Right cardiac atrium (tissue), 5 donors: ENCODE measurements at regions of chr9 and their contacts with region 1.

Region 1: GRCh38 chr9:93962561-93963440 is 7.6 kb upstream of the BARX1 start:
- DNase-seq: peak; percentile 72 to 89 (median 85)
- ATAC-seq: peak; percentile 73 to 83
- H3K4me3 ChIP-seq: no peak overlapping the region
- H3K27ac ChIP-seq: no peak overlapping the region
- H3K4me1 ChIP-seq: peaks cover 8% of the 10 kb centered on the region
- H3K27me3 ChIP-seq: no peaks in the 10 kb centered on the region

Region 2: DNA sequence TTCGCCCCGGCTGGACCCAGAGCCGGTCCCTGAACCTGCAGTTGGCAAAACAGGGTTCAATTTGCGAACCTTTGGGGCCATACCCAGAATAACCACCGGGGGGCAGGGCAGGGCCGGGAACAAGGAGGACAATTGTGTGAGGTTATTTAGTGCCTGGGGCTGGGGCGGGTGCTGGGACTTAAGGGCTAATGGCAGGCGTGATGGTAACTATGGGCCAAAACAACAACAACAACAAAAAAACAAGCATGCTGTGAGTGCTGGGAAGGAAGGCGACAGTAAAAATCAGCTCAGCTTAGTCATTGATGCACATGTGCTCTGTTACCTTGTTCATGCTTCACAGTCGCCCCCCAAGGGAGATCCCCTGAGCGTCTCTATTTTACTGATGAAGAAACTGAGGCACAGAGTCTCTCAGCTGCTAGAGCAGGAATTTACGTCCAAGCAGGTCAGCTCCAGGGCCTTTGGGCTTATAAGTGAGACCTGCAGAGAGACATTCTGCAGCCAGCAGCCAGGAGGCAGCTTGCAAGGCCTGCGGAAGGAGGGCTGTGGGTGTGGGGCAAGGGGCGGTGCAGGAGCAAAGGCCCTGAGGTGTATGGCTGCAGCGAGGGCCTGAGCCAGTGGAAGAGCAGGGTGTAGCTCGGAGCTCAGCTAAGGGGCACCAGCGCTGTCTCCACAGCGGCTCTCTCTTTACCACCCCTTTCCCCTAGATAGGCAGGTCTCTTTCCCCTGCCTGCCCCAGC is 280.4 kb before region 1 on chr9:
- intact Hi-C with region 1: loop called (anchors 5 kb)
- DNase-seq: peak; percentile 58 to 85 (median 82)
- ATAC-seq: peak; percentile 14 to 64
- H3K4me3 ChIP-seq: no peak overlapping the region
- H3K27ac ChIP-seq: no peak overlapping the region
- H3K4me1 ChIP-seq: no peaks in the 10 kb centered on the region
- H3K27me3 ChIP-seq: no peaks in the 10 kb centered on the region

Region 3: DNA sequence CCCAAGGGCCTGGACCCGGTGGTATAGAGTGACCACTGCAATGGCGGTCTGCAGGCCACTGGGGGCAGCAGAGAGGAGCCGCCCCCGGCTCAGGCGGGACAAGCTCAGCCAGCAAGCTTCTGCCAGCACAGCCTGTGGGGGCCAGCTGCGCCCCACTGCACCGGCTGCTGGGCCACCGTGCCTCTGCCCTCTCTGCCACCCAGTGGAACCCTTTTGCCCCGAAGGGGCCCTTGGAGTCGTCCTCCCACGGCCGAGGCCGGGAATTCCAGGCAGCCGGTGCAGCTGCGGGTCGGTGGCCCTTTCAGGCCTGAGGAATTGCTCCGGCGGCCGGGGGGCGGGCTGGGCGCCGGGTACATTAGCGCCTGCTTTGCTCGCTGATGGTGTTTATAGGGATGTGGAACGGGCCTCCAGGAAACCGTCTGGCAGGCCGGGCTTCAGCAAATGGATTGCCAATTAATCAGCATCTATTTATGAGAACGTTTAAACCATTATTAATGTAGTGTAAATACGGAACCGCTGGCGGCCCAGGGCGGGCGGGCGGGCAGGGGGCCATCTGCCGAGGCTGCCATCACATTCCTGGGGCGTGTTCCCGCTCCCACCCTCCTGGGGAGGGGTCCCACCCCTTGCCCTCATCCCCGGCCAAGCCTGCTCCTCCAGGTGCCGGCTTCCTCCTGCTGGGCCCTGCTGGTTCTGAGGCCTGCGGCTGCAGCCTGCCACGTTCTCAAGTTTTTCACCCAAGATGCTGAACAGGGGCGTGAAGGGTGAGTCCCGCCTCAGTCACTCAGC is 135.1 kb before region 1 on chr9:
- intact Hi-C with region 1: loop called in 2 of 4 experiments (anchors 10 kb)
- DNase-seq: peak; percentile 38 to 79 (median 70)
- ATAC-seq: peak; percentile 90 to 94
- H3K4me3 ChIP-seq: peak overlapping the region; percentile 33
- H3K27ac ChIP-seq: no peak overlapping the region
- H3K4me1 ChIP-seq: no peaks in the 10 kb centered on the region
- H3K27me3 ChIP-seq: no peaks in the 10 kb centered on the region

Region 4: DNA sequence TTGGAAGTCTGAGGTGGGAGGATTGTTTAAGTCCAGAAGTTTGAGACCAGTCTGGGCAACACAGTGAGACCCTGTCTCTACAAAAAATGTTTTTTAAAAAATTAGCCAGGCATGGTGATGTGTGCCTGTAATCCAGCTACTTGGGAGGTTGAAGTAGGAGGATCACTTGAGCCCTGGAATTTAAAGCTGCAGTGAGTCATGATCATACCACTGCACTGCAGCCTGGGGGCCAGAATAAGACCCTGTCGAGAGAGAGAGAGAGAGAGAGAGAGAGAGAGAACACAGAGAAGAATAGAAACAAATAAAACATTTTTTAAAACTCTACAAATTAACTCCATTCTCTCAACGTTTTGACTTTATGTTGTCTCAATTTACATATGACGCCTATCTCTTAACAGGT is 119.4 kb before region 1 on chr9:
- intact Hi-C with region 1: no loop called
- DNase-seq: no peak
- ATAC-seq: no peak
- H3K4me3 ChIP-seq: no peak overlapping the region
- H3K27ac ChIP-seq: no peak overlapping the region
- H3K4me1 ChIP-seq: no peaks in the 10 kb centered on the region
- H3K27me3 ChIP-seq: no peaks in the 10 kb centered on the region

Region 5: GRCh38 chr9:94076557-94076956 is 113.8 kb after region 1 on chr9:
- intact Hi-C with region 1: no loop called
- DNase-seq: no peak
- ATAC-seq: no peak
- H3K4me3 ChIP-seq: no peak overlapping the region
- H3K27ac ChIP-seq: no peak overlapping the region
- H3K4me1 ChIP-seq: no peaks in the 10 kb centered on the region
- H3K27me3 ChIP-seq: no peaks in the 10 kb centered on the region

Region 6: GRCh38 chr9:94199776-94200175 is 237.0 kb after region 1 on chr9:
- intact Hi-C with region 1: no loop called
- DNase-seq: no peak
- ATAC-seq: no peak
- H3K4me3 ChIP-seq: no peak overlapping the region
- H3K27ac ChIP-seq: no peak overlapping the region
- H3K4me1 ChIP-seq: no peaks in the 10 kb centered on the region
- H3K27me3 ChIP-seq: no peaks in the 10 kb centered on the region